Activated B cell treated with CpG ODN at 0.5 μM for 24 hours (primary cell): ENCODE measurements at regions of chr14 and their contacts with region 1.

Region 1: DNA sequence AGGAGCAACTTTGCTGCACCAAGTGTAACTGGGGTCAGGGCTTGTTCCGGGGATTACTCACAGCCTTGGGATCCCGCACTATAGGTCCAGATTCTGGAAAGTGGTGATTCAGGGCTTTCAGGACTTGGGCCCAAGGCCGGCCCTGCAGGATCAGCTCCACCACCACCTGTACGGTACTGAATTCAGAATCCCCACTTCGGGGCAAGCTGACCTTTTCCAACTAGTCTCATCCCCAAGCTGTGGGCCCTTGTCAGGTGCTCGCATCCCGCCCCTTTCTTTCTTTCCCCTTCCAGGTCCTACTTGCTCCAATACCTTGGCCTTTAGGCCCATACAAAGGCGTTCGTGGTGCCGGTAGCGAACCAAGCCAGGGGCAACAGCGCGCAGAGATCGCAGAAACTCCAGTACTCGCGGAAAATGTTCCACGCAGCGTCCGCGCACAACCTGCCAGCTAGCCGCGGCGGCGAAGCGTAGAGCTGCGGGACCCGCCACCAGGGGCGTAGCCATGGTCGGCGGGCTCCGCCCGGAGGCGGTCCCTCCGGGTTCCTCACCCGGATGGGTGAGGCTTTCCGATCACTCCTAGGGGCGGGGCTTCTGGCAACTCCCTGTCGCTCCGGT is 487 bp downstream of the TINF2 start:
- DNase-seq: peak; percentile 91
- ATAC-seq: peak; percentile 81
- H3K4me3 Mint-ChIP-seq: peak overlapping the region; percentile 99
- H3K27ac Mint-ChIP-seq: peak overlapping the region; percentile 100
- H3K4me1 Mint-ChIP-seq: peaks cover 68% of the 10 kb centered on the region
- H3K27me3 Mint-ChIP-seq: no peaks in the 10 kb centered on the region
- CTCF ChIP-seq: no peak

Region 2: GRCh38 chr14:23415821-23416778 is 825.8 kb before region 1 on chr14:
- CTCF ChIA-PET with region 1: no interaction called
- POLR2A ChIA-PET with region 1: no interaction called
- intact Hi-C with region 1: no loop called
- DNase-seq: no peak
- ATAC-seq: no peak
- H3K4me3 Mint-ChIP-seq: no peak overlapping the region
- H3K27ac Mint-ChIP-seq: no peak overlapping the region
- H3K4me1 Mint-ChIP-seq: no peaks in the 10 kb centered on the region
- H3K27me3 Mint-ChIP-seq: peaks cover 21% of the 10 kb centered on the region
- CTCF ChIP-seq: no peak

Region 3: DNA sequence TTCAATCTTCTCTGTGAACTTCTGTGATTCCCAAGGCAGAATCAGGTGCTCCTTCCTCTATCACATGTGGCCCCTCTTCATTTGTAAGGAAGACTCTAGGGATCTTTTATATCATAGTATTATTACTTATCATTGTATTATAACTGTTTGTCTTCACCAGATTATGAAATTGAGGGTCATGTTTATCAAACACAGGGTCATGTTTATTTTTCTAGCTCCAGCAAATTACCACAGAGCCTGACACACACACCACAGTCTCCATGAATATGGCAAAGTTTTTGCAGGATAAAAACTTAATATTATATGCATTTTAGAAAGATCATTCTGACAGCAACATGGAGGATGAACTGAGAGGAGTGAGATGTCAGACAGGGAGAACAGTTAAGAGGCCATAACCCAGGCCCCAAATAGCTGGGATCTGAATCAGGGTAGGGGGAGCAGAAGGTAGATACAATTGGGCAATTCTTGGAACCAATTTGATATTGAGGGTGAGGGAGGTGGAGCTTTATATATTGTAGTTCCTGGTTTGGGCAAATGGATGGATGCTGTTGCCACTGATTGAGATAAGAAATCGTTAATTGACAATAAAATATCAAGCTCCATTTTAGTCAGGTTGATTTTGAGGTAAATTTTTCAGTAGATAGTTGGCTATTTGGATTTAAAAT is 475.1 kb before region 1 on chr14:
- CTCF ChIA-PET with region 1: no interaction called
- POLR2A ChIA-PET with region 1: no interaction called
- intact Hi-C with region 1: no loop called
- DNase-seq: no peak
- ATAC-seq: no peak
- H3K4me3 Mint-ChIP-seq: no peak overlapping the region
- H3K27ac Mint-ChIP-seq: no peak overlapping the region
- H3K4me1 Mint-ChIP-seq: no peaks in the 10 kb centered on the region
- H3K27me3 Mint-ChIP-seq: peaks cover 10% of the 10 kb centered on the region
- CTCF ChIP-seq: no peak

Region 4: GRCh38 chr14:24114536-24115450 is 127.1 kb before region 1 on chr14 and contains the starts of genes DCAF11 and NRL:
- CTCF ChIA-PET with region 1: interaction called, 4 read pairs
- POLR2A ChIA-PET with region 1: interaction called, 37 read pairs
- intact Hi-C with region 1: loop called (anchors 1 kb)
- DNase-seq: peak; percentile 97
- ATAC-seq: peak; percentile 83
- H3K4me3 Mint-ChIP-seq: peak within 1 kb of the TSS; percentile 99
- H3K27ac Mint-ChIP-seq: peak within 1 kb of the TSS; percentile 100
- H3K4me1 Mint-ChIP-seq: peaks cover 27% of the 10 kb centered on the region
- H3K27me3 Mint-ChIP-seq: no peaks in the 10 kb centered on the region
- CTCF ChIP-seq: no peak
- total RNA-seq, gene DCAF11: 84.3 and 86.5 TPM in 2 replicates
- total RNA-seq, gene NRL: 5.4 and 5.5 TPM in 2 replicates

Region 5: GRCh38 chr14:24160850-24161804 is 80.8 kb before region 1 on chr14 and contains the start of gene IRF9:
- CTCF ChIA-PET with region 1: interaction called, 12 read pairs
- POLR2A ChIA-PET with region 1: interaction called, 34 read pairs
- intact Hi-C with region 1: loop called (anchors 1 kb)
- DNase-seq: peak; percentile 90
- ATAC-seq: peak; percentile 92
- H3K4me3 Mint-ChIP-seq: peak within 1 kb of the TSS; percentile 98
- H3K27ac Mint-ChIP-seq: peak within 1 kb of the TSS; percentile 95
- H3K4me1 Mint-ChIP-seq: peaks cover 45% of the 10 kb centered on the region
- H3K27me3 Mint-ChIP-seq: no peaks in the 10 kb centered on the region
- CTCF ChIP-seq: no peak
- total RNA-seq, gene IRF9: 221 and 229 TPM in 2 replicates

Region 6: DNA sequence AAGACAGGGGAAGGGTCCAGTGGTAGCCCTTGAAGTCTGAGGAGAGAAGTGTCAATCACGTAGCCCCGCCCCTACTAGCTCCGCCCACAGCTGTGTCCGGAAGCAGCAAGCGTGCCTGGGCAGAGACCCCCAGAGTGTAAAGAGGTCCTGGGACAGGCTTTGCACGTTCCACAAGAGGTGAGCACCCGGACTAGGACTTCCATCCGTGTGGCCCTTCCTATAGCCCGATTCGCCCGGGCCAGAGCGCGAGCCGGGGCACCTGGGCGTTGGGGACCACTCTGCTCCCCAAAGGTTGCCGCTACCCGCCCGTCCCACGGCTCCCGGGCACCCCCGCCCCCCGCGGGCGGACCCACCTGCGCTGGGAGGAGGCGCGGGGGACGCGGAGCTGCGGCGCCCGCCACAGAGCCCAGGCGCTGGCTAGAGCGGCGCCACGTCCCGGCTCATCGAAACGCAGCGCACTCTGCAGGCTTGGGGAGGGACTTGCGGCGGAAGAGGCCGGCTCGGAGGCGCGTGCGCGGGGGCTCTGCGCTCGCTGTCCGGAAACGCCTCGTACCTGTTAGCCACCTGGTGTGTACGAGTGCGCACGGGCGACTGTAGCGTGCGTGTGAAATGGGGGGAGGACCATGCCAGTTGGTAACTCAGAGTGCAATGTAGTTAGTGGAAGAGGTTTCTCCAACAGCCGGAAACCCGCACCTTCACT is 29.3 kb after region 1 on chr14 and contains the start of gene RABGGTA:
- CTCF ChIA-PET with region 1: interaction called, 30 read pairs
- POLR2A ChIA-PET with region 1: interaction called, 175 read pairs
- intact Hi-C with region 1: loop called (anchors 1 kb)
- DNase-seq: peak; percentile 88
- ATAC-seq: peak; percentile 83
- H3K4me3 Mint-ChIP-seq: peak within 1 kb of the TSS; percentile 90
- H3K27ac Mint-ChIP-seq: peak within 1 kb of the TSS; percentile 96
- H3K4me1 Mint-ChIP-seq: peaks cover 57% of the 10 kb centered on the region
- H3K27me3 Mint-ChIP-seq: no peaks in the 10 kb centered on the region
- CTCF ChIP-seq: no peak
- total RNA-seq, gene RABGGTA: 53.6 and 70.5 TPM in 2 replicates

Region 7: DNA sequence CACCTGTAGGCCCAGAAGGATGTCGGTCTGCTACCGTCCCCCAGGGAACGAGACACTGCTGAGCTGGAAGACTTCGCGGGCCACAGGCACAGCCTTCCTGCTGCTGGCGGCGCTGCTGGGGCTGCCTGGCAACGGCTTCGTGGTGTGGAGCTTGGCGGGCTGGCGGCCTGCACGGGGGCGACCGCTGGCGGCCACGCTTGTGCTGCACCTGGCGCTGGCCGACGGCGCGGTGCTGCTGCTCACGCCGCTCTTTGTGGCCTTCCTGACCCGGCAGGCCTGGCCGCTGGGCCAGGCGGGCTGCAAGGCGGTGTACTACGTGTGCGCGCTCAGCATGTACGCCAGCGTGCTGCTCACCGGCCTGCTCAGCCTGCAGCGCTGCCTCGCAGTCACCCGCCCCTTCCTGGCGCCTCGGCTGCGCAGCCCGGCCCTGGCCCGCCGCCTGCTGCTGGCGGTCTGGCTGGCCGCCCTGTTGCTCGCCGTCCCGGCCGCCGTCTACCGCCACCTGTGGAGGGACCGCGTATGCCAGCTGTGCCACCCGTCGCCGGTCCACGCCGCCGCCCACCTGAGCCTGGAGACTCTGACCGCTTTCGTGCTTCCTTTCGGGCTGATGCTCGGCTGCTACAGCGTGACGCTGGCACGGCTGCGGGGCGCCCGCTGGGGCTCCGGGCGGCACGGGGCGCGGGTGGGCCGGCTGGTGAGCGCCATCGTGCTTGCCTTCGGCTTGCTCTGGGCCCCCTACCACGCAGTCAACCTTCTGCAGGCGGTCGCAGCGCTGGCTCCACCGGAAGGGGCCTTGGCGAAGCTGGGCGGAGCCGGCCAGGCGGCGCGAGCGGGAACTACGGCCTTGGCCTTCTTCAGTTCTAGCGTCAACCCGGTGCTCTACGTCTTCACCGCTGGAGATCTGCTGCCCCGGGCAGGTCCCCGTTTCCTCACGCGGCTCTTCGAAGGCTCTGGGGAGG is 69.0 kb after region 1 on chr14 and contains the start of gene LTB4R:
- CTCF ChIA-PET with region 1: interaction called, 42 read pairs
- POLR2A ChIA-PET with region 1: interaction called, 46 read pairs
- intact Hi-C with region 1: loop called (anchors 1 kb)
- DNase-seq: peak; percentile 73
- ATAC-seq: peak; percentile 78
- H3K4me3 Mint-ChIP-seq: peak within 1 kb of the TSS; percentile 75
- H3K27ac Mint-ChIP-seq: peak within 1 kb of the TSS; percentile 80
- H3K4me1 Mint-ChIP-seq: peaks cover 59% of the 10 kb centered on the region
- H3K27me3 Mint-ChIP-seq: no peaks in the 10 kb centered on the region
- CTCF ChIP-seq: no peak
- total RNA-seq, gene LTB4R: 8.2 and 8.6 TPM in 2 replicates

Region 8: GRCh38 chr14:24518851-24519250 is 276.9 kb after region 1 on chr14:
- CTCF ChIA-PET with region 1: no interaction called
- POLR2A ChIA-PET with region 1: no interaction called
- intact Hi-C with region 1: no loop called
- DNase-seq: no peak
- ATAC-seq: no peak
- H3K4me3 Mint-ChIP-seq: no peak overlapping the region
- H3K27ac Mint-ChIP-seq: no peak overlapping the region
- H3K4me1 Mint-ChIP-seq: no peaks in the 10 kb centered on the region
- H3K27me3 Mint-ChIP-seq: peaks cover 4% of the 10 kb centered on the region
- CTCF ChIP-seq: no peak

Region 9: GRCh38 chr14:24605435-24606190 is 363.7 kb after region 1 on chr14:
- CTCF ChIA-PET with region 1: no interaction called
- POLR2A ChIA-PET with region 1: no interaction called
- intact Hi-C with region 1: no loop called
- DNase-seq: peak; percentile 48
- ATAC-seq: peak; percentile 95
- H3K4me3 Mint-ChIP-seq: no peak overlapping the region
- H3K27ac Mint-ChIP-seq: no peak overlapping the region
- H3K4me1 Mint-ChIP-seq: peaks cover 34% of the 10 kb centered on the region
- H3K27me3 Mint-ChIP-seq: peaks cover 2% of the 10 kb centered on the region
- CTCF ChIP-seq: peak; percentile 94